ENCODE measurements at regions of chrX and their contacts with region 1.

Region 1: GRCh38 chrX:136491832-136492231 is 4.1 kb downstream of the BRS3 start:
- H3K4me3 ChIP-seq: no peak overlapping the region
- H3K27ac ChIP-seq: no peak overlapping the region
- H3K4me1 ChIP-seq: peaks cover 2% of the 10 kb centered on the region; the same call in 1 of the 2 replicates
- CTCF ChIP-seq: no peak

Region 2: DNA sequence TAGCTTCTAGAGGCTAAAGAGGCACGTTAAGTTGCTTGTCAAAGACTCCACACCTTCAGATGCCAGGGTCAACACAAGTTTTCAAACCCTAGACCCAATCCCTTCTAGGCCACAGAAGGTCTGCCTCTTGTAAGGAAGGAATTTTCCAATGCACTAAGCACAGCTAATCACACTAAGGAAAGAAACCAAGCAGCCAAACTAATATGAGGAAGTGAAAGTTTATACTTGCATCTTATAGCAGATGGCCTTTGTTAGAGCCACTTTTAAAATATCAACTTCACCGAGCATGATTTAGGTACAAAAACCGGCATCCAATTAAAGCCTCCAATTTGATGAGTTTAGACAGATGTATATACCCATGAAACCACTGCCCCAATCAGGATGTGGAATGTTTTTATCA is 334.6 kb before region 1 on chrX:
- CTCF ChIA-PET with region 1: no interaction called
- POLR2A ChIA-PET with region 1: interaction called, 10 read pairs
- H3K4me3 ChIP-seq: no peak overlapping the region
- H3K27ac ChIP-seq: no peak overlapping the region
- H3K4me1 ChIP-seq: peaks cover 6% of the 10 kb centered on the region; the same call in 1 of the 2 replicates
- CTCF ChIP-seq: no peak

Region 3: GRCh38 chrX:136437774-136438173 is 54.1 kb before region 1 on chrX:
- CTCF ChIA-PET with region 1: no interaction called
- POLR2A ChIA-PET with region 1: no interaction called
- H3K4me3 ChIP-seq: no peak overlapping the region
- H3K27ac ChIP-seq: no peak overlapping the region
- H3K4me1 ChIP-seq: no peaks in the 10 kb centered on the region
- CTCF ChIP-seq: no peak

Region 4: GRCh38 chrX:136457303-136457917 is 34.4 kb before region 1 on chrX:
- CTCF ChIA-PET with region 1: no interaction called
- POLR2A ChIA-PET with region 1: no interaction called
- H3K4me3 ChIP-seq: no peak overlapping the region
- H3K27ac ChIP-seq: no peak overlapping the region
- H3K4me1 ChIP-seq: peaks cover 7% of the 10 kb centered on the region
- CTCF ChIP-seq: no peak

Region 5: GRCh38 chrX:136555694-136556093 is 63.9 kb after region 1 on chrX:
- CTCF ChIA-PET with region 1: no interaction called
- POLR2A ChIA-PET with region 1: no interaction called
- H3K4me3 ChIP-seq: no peak overlapping the region
- H3K27ac ChIP-seq: no peak overlapping the region
- H3K4me1 ChIP-seq: no peaks in the 10 kb centered on the region
- CTCF ChIP-seq: no peak

Region 6: DNA sequence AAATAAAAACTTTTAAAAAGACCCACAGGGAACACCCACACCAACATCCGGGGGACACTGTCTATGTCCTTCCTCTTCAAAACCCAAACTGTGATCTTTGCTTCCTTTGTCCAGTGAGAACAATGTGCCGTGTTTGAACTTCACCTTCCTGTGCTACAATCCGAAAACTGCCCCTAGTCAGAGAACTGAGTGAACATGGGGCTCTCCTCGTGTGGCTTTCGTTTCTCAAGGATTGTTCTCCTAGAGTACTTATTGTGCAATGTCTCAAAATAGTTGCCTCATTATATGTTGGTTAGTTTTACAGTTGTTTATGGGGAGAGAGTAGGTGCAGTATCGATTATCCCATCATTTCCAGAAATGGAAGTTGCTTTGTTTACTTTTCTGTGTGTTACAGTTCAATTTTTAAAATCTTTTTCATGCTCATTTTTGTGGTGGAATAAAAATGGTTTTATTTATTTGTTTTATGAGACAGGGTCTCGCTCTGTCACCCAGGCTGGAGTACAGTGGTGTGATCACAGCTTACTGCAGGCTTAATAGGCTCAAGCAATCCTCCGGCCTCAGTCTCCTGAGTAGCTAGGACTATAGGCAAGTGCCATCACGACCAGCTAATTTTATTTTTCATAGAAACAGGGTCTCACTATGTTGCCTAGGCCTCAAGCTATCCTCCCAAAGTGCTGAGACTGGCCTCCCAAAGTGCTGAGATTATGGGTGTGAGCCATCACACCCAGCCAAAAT is 358.8 kb after region 1 on chrX:
- CTCF ChIA-PET with region 1: no interaction called
- POLR2A ChIA-PET with region 1: no interaction called
- H3K4me3 ChIP-seq: no peak overlapping the region
- H3K27ac ChIP-seq: no peak overlapping the region
- H3K4me1 ChIP-seq: no peaks in the 10 kb centered on the region
- CTCF ChIP-seq: no peak